HCT116 (cell line): ENCODE measurements at regions of chr3 and their contacts with region 1.

Region 1: DNA sequence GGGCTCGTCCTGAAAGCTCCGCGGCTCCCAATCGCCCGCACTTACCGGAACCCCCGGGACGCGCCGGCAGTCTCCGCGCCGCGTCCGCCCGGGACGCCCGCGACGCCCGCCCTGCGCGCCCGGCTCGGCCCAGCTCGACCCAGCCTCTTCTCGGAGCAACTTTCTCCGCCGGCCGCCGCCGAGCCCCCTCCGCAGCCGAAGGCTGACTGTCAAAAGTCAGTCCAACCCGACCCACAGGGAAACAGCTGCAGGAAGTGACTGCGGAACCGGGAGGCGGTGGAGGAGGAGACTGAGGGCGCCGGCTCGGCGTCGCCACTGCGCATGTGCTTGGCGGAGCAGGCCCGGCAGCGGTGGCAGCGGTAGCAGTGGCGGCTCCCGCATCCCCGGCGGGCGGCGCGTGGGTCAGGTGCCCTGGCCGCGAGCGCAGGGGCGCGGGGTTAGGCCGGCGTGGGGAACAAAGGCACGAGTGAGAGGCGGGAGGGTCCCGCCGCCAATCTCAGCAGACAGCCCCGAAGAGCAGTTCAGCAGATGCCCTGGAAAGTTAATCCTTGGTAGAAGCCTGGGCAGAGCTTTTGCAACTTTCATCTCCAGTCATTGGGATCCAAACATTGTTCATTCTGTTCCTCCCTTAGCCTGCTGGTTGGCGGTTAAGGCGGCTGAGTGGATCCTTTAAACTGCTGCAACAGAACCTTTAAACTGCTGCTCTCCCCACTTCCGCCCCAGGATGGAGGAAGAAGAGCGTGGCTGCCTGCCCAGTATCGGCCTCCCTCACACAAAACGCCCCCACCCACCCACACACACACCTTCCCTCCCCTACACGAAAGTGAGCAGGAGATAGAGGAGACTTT is at the start of gene ZMAT3:
- DNase-seq: peak; percentile 34
- ATAC-seq: peak; percentile 92
- H3K4me3 ChIP-seq: peak within 1 kb of the TSS; percentile 66 to 78
- H3K27ac ChIP-seq: peak within 1 kb of the TSS; percentile 68
- H3K4me1 ChIP-seq: peaks cover 11 to 24% of the 10 kb centered on the region in 2 experiments
- H3K27me3 ChIP-seq: no peaks in the 10 kb centered on the region
- CTCF ChIP-seq: no peak
- POLR2A ChIP-seq: peak; percentile 76
- RAD21 ChIP-seq: no peak
- total RNA-seq, gene ZMAT3: 12.1 TPM

Region 2: DNA sequence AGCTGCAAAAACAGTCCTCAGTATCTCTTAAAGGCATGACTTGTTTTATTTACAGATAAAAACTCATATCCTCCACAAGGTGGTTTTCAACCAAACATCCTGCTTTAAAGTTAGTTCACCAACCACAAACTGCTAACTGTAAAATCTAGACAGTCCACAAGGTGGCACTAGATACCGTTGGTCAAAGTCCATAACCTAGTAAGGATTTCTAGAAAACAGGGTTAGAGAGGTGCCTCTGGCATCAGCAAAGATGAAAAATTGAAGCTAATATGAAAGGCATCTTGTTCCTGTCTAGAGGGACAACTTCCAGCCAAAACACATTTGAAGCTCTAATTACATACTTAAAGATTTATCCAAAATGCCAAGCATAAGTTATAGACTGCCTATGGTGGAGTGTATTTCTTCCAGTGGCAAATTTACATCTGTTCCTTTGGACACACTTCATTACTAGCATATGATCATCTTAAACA is 56.2 kb before region 1 on chr3:
- CTCF ChIA-PET with region 1: no interaction called
- POLR2A ChIA-PET with region 1: no interaction called
- RAD21 ChIA-PET with region 1: no interaction called
- intact Hi-C with region 1: loop called (anchors 5 kb)
- DNase-seq: peak; percentile 69
- ATAC-seq: peak; percentile 95
- H3K4me3 ChIP-seq: no peak overlapping the region
- H3K27ac ChIP-seq: no peak overlapping the region
- H3K4me1 ChIP-seq: peaks cover 0 to 2% of the 10 kb centered on the region in 2 experiments; a peak in 1 of 4 replicates
- H3K27me3 ChIP-seq: no peaks in the 10 kb centered on the region
- CTCF ChIP-seq: peak; percentile 80 to 88 (median 87)
- POLR2A ChIP-seq: no peak
- RAD21 ChIP-seq: peak; percentile 91

Region 3: GRCh38 chr3:179147873-179148615 is 76.3 kb after region 1 on chr3 and contains the start of gene PIK3CA:
- CTCF ChIA-PET with region 1: interaction called, 3 read pairs
- POLR2A ChIA-PET with region 1: no interaction called
- RAD21 ChIA-PET with region 1: no interaction called
- intact Hi-C with region 1: loop called (anchors 2 kb)
- DNase-seq: peak; percentile 94
- ATAC-seq: peak; percentile 85
- H3K4me3 ChIP-seq: peak within 1 kb of the TSS; percentile 65 to 84
- H3K27ac ChIP-seq: peak within 1 kb of the TSS; percentile 77
- H3K4me1 ChIP-seq: peaks cover 0 to 14% of the 10 kb centered on the region in 2 experiments; a peak in 3 of 4 replicates
- H3K27me3 ChIP-seq: no peaks in the 10 kb centered on the region
- CTCF ChIP-seq: no peak
- POLR2A ChIP-seq: peak; percentile 65
- RAD21 ChIP-seq: no peak
- total RNA-seq, gene PIK3CA: 17.9 TPM